H1 (cell line): ENCODE measurements at regions of chr20 and their contacts with region 1.

Region 1: DNA sequence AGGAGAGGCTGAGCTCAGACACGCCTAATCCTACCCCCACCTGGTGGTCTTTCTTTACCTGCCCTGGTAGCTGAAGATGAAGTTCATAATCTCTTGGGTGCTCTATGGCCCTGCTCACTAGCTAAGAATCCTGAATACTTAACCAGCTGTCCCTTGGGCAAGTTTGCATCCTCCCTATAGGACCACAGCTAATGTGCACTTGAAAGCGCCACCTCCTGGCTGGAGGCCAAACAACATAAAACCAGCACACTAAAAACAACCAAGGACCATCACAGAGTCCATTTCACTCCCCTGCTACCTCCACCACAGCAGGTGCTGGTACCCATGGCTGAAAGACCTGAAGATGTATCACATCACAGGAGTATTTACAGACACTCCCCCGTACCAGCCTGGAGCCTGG is 155.5 kb upstream of the SLC24A3 start:
- DNase-seq: peak in 1 of 2 experiments; percentile 54
- H3K4me3 ChIP-seq: no peak overlapping the region
- H3K27ac ChIP-seq: no peak overlapping the region
- H3K4me1 ChIP-seq: no peaks in the 10 kb centered on the region
- H3K27me3 ChIP-seq: no peaks in the 10 kb centered on the region
- CTCF ChIP-seq: peak; percentile 13 to 46 (median 17); a peak in 3 of 4 replicates
- EP300 ChIP-seq: no peak
- POLR2A ChIP-seq: no peak
- RAD21 ChIP-seq: peak; percentile 34; a peak in 2 of 4 replicates

Region 2: DNA sequence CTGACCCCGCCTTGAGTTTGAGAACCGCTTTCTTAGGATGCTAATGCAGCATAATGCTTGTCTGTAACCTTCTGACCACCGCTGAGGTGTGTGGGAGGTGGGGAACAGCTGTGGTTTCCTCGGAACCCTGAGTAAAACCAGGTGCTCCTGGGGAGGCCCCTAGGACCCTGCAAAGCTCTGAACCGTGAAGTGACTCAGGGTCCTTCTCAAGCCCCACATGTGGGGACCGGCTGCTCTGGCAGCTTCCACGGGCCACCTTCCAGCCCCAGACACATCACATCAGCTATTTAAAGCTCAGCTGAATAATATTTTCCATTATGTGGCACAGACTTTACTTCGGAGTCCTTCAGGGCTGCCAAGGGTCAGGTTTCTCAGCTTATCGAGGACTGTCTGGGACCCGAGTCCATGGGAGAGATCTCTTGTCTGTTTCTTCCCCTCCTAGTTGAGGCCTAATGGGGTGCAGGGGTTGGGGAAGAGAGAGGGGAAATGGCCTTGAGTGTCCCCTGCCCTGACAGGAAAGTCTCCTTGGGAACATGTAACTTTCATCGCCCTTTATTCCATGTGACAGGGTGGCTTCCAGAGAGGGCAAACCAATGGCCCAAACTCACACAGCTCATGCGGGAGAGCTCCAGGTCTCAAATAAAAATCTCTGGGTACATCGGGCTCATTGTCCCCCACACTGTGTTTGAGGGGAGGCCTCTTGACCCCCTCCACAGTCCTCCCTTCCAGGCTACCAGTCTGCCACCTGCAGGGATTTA is 30.6 kb before region 1 on chr20:
- CTCF ChIA-PET with region 1: interaction called, 12 read pairs
- POLR2A ChIA-PET with region 1: no interaction called
- DNase-seq: peak in 1 of 2 experiments; percentile 29
- H3K4me3 ChIP-seq: no peak overlapping the region
- H3K27ac ChIP-seq: no peak overlapping the region
- H3K4me1 ChIP-seq: no peaks in the 10 kb centered on the region
- H3K27me3 ChIP-seq: no peaks in the 10 kb centered on the region
- CTCF ChIP-seq: no peak
- EP300 ChIP-seq: no peak
- POLR2A ChIP-seq: no peak
- RAD21 ChIP-seq: no peak

Region 3: DNA sequence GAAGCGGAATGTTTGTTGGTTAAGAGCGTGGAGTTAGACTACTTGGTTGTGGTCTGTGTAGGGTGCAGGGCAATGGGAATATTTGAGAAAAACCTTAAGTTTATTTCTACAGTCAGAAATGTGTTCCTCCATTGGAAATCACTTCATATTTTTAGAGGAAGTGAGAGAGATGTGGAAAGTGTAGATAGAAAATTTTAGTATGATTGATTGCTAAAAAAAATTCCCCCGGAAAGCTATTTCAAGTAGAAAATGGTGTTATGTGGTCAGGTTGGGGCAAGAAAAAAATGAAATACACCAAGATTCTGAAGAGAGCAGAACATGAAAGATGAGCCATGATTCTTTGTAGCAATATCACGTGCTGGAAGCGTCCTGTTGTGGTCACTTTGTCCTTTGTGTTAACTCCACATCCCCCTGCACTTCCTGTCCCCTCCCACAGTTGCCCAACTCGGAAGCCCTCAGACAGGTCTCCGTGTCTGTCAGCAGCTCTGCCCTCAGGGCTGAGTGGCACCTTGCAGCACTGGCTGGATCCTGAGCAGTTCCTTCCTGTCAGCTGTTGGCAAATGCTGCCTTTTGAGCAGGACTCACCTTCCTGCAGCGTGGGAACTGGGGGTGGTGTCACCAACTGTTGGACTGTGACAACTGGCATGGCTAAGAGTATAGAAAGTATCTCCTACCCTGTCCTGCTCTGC is 18.1 kb after region 1 on chr20:
- CTCF ChIA-PET with region 1: interaction called, 18 read pairs
- POLR2A ChIA-PET with region 1: no interaction called
- DNase-seq: peak in 1 of 2 experiments; percentile 20
- H3K4me3 ChIP-seq: no peak overlapping the region
- H3K27ac ChIP-seq: no peak overlapping the region
- H3K4me1 ChIP-seq: no peaks in the 10 kb centered on the region
- H3K27me3 ChIP-seq: no peaks in the 10 kb centered on the region
- CTCF ChIP-seq: no peak
- EP300 ChIP-seq: no peak
- POLR2A ChIP-seq: no peak
- RAD21 ChIP-seq: no peak

Region 4: GRCh38 chr20:19193349-19193748 is 136.4 kb after region 1 on chr20:
- CTCF ChIA-PET with region 1: no interaction called
- POLR2A ChIA-PET with region 1: no interaction called
- DNase-seq: no peak
- H3K4me3 ChIP-seq: no peak overlapping the region
- H3K27ac ChIP-seq: no peak overlapping the region
- H3K4me1 ChIP-seq: no peaks in the 10 kb centered on the region
- H3K27me3 ChIP-seq: no peaks in the 10 kb centered on the region
- CTCF ChIP-seq: no peak
- EP300 ChIP-seq: no peak
- POLR2A ChIP-seq: no peak
- RAD21 ChIP-seq: no peak